Gastrocnemius medialis (tissue), 4 donors: ENCODE measurements at regions of chr11 and their contacts with region 1.

Region 1: DNA sequence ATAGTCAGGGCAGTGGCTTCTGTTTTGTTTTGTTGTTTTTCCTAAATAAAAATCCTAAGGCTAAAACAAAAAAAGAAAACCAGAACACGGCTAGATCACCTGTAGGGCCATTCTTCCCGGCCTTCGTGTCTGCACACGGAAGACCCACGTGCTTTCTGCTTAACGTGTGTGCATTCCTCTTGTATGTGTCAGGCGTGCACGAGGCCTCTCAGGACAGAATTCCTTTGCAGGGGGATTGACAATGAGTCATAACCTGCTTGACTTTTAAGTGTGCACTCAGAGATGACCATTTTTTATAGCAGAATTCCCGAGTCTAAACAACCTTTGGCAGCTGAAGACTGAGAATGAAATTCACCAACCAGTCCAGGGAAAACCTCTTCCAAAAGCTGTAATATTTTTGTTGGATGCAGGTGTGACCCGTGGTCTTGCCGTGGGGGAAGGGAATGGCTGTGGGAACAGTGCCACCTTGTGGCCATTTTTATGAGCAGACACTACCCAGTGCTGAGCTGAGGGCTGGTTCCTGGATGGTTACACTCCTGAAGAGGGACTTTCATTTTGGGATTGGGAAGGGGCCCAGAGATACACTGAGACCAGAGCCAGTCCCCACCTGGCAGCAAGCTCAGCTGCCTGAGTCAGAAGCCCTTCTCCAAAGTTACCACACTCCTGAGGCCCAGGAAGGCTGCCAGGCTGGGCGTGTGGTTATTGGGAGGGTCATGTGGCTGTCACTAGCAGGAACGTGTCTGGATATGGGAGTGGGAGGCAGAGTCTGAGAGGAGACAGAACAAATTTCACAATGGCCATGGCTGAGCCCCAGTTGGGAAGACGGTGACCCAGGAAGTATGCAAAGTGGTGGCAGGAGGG is 35.8 kb upstream of the DKK3 start:
- DNase-seq: peak; percentile 77 to 95
- ATAC-seq: peak; percentile 80
- H3K4me3 ChIP-seq: peak overlapping the region in 2 of 4 donors; percentile 12 to 15
- H3K27ac ChIP-seq: peak overlapping the region; percentile 58 to 74 (median 68)
- H3K4me1 ChIP-seq: peaks cover 11% of the 10 kb centered on the region in 2 donors
- H3K27me3 ChIP-seq: no peaks in the 10 kb centered on the region
- CTCF ChIP-seq: peak; percentile 90 to 95 (median 92)
- POLR2A ChIP-seq: peak in 1 of 2 donors; percentile 9

Region 2: GRCh38 chr11:11798586-11799438 is 245.4 kb before region 1 on chr11:
- in situ Hi-C with region 1: loop called (anchors 10 kb)
- intact Hi-C with region 1: loop called (anchors 1 kb)
- DNase-seq: peak; percentile 11 to 77
- ATAC-seq: peak; percentile 77 to 95
- H3K4me3 ChIP-seq: no peak overlapping the region
- H3K27ac ChIP-seq: no peak overlapping the region
- H3K4me1 ChIP-seq: no peaks in the 10 kb centered on the region
- H3K27me3 ChIP-seq: no peaks in the 10 kb centered on the region
- CTCF ChIP-seq: peak; percentile 68 to 91 (median 89)
- POLR2A ChIP-seq: no peak

Region 3: DNA sequence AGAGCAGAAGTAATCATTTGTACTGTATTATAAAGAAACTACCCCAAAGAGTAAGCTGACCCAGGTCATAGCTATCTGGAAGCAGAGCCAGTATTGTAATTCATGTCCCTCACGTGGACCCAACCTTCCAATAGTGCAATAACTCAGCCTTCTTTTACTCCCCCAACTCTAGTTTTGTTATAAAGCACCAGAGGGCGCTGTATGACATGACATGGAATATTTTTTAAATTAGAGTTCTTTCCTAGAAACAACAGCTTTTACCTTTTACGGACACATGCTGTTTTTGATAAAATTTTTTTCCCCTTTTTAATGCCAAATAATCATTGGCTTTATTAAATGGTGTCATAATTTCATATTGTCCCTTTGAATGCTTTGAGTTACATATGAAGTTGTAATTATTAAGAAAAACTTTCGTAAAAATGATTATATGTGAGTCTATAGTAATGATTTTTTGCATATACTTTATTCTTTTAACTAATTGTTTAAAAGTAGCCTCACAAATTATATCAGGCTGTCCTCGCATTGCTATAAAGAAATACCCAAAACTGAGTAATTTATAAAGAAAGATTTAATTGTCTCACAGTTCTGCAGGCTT is 112.6 kb before region 1 on chr11:
- in situ Hi-C with region 1: loop called in 3 of 4 experiments (anchors 5 to 25 kb)
- intact Hi-C with region 1: loop called (anchors 1 kb)
- DNase-seq: no peak
- ATAC-seq: peak; percentile 39 to 77
- H3K4me3 ChIP-seq: no peak overlapping the region
- H3K27ac ChIP-seq: no peak overlapping the region
- H3K4me1 ChIP-seq: no peaks in the 10 kb centered on the region
- H3K27me3 ChIP-seq: no peaks in the 10 kb centered on the region
- CTCF ChIP-seq: peak; percentile 40 to 55 (median 49)
- POLR2A ChIP-seq: no peak

Region 4: GRCh38 chr11:11998091-11998781 is 46.0 kb before region 1 on chr11:
- in situ Hi-C with region 1: no loop called
- intact Hi-C with region 1: no loop called
- DNase-seq: no peak
- ATAC-seq: no peak
- H3K4me3 ChIP-seq: no peak overlapping the region
- H3K27ac ChIP-seq: no peak overlapping the region
- H3K4me1 ChIP-seq: peaks cover 0 to 9% of the 10 kb centered on the region in 2 donors
- H3K27me3 ChIP-seq: peaks cover 0 to 3% (median 0%) of the 10 kb centered on the region in 3 donors
- CTCF ChIP-seq: no peak
- POLR2A ChIP-seq: no peak

Region 5: GRCh38 chr11:12079726-12080556 is 35.8 kb after region 1 on chr11:
- in situ Hi-C with region 1: no loop called
- intact Hi-C with region 1: no loop called
- DNase-seq: peak in 1 of 2 donors; percentile 56
- ATAC-seq: peak in 1 of 2 donors; percentile 7
- H3K4me3 ChIP-seq: no peak overlapping the region
- H3K27ac ChIP-seq: peak overlapping the region in 3 of 4 donors; percentile 35 to 68 (median 54)
- H3K4me1 ChIP-seq: peaks cover 20 to 22% of the 10 kb centered on the region in 2 donors
- H3K27me3 ChIP-seq: peaks cover 0 to 10% (median 0%) of the 10 kb centered on the region in 3 donors
- CTCF ChIP-seq: no peak
- POLR2A ChIP-seq: no peak

Region 6: DNA sequence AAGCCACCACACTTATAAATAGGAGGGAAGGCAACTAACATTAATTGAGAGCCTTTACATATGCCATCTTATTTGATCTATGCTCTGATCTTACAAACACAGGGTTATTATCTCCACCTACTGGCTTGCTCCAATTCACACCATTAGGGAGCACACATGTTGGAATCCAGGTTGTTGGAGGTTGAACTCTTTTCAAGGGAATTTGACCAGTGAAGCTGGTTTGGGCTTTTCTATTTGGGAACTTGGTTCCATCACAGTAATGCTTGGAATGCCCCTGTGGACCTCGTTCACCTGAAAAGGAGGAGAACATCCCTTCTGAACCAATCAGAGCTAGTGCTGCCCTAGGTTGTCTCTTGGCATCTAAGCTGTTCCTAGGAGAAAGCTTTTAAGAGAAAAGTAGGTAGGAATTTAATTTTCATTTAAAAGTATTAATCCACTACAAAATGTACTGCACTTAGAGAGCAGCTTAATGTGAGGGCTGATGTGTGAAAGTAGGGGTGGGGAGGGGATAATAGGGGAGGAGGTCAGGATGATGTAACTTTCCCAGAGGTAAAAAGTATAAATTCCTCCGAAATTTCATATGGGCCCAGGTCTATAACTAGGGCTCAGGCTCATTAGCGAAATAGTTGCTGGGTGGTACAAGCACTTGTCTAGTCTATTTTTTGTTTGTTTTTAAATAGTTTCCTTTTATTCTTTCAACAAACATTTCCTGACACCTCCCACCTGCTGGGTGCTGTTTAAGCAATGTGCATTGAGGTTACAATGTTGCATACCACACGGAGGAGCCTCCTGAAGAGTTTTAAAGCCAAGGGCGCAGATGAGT is 58.6 kb after region 1 on chr11:
- in situ Hi-C with region 1: no loop called
- intact Hi-C with region 1: loop called (anchors 2 kb)
- DNase-seq: no peak
- ATAC-seq: peak in 1 of 2 donors; percentile 41
- H3K4me3 ChIP-seq: no peak overlapping the region
- H3K27ac ChIP-seq: no peak overlapping the region
- H3K4me1 ChIP-seq: no peaks in the 10 kb centered on the region
- H3K27me3 ChIP-seq: peaks cover 10 to 19% (median 15%) of the 10 kb centered on the region in 3 donors
- CTCF ChIP-seq: peak in 1 of 5 experiments; percentile 17
- POLR2A ChIP-seq: no peak

Region 7: DNA sequence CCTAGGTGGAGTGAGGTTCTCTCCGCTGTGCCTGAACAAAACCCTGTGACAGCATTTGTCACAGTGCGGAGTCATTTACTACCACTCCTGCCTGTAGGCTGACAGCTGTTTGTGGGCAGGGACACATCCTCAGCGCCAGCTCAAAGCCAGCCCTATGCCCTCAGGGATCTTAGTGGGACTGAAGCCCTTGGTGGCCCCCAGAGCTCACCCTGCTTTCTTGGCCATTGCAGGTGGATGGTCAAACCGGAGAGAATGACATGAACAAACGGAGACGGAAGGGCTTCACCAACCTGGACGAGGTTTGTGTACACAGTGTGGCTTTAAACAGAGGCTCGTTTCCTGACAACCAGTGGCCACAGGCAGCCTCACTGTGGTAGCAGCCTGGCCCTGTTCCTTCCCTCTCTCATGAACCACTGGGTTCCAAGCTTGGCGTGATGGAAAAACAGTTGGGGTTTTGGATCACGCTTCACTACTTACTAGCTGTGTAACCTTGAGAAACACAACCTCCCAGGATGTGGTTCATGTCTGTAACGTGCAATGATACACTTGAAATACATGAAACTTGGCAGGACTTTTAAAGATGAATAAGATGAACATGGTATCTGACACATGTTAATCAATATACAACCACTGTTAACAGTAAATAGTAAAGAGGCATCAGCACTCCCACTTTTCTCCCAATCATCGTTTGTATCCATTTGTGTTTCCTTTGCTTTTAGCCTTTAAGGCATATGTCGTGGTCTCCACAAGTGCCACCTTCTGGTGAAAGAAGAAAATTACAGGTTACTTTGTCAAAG is 192.0 kb after region 1 on chr11:
- in situ Hi-C with region 1: loop called (anchors 5 kb)
- intact Hi-C with region 1: loop called (anchors 1 kb)
- DNase-seq: peak in 1 of 2 donors; percentile 81
- ATAC-seq: peak; percentile 80 to 81
- H3K4me3 ChIP-seq: no peak overlapping the region
- H3K27ac ChIP-seq: peak overlapping the region; percentile 52 to 92 (median 76)
- H3K4me1 ChIP-seq: peaks cover 7 to 12% of the 10 kb centered on the region in 2 donors
- H3K27me3 ChIP-seq: no peaks in the 10 kb centered on the region
- CTCF ChIP-seq: peak; percentile 55 to 75 (median 69)
- POLR2A ChIP-seq: peak; percentile 27 to 59